Heart left ventricle (tissue), 16 donors: ENCODE measurements at regions of chr12 and their contacts with region 1.

Region 1: DNA sequence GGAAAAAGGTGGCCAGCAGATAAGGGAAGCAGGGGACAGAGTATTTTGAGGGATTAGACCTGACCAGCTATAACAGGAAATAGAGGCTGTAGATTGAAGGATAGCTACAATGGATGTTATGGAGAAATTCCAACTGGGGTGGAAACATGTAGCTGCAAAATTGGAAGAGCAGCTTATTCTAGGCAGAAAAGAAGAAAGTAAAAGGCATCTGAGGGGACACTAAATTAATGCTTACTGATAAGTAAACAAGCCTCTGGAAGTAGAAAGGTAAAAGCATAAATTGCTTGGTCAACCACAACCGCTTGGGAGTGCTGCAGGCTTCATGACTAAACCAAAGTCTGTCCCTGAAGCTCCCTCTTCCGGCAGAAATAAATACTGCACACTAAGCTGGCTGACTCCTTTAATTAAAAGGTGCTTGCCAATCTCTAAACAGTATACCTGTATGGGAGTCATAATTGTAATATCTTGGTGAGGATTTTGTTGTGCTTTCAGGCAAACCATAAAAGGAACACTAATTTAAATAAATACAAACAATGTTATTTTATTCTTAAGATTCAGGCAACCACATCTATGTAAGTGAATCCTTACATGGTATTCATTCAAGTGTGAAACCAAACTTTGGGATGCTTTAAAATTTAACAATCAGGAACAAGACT is 7.7 kb downstream of the UBC start:
- DNase-seq: peak; percentile 73 to 87 (median 85)
- ATAC-seq: peak in 3 of 4 donors; percentile 45 to 66 (median 56)
- H3K4me3 ChIP-seq: no peak overlapping the region
- H3K27ac ChIP-seq: peak overlapping the region in 1 of 12 donors; percentile 37
- H3K4me1 ChIP-seq: peaks cover 10 to 52% (median 37%) of the 10 kb centered on the region in 12 donors
- H3K27me3 ChIP-seq: no peaks in the 10 kb centered on the region
- CTCF ChIP-seq: peak; percentile 92 to 99 (median 97)
- POLR2A ChIP-seq: no peak

Region 2: DNA sequence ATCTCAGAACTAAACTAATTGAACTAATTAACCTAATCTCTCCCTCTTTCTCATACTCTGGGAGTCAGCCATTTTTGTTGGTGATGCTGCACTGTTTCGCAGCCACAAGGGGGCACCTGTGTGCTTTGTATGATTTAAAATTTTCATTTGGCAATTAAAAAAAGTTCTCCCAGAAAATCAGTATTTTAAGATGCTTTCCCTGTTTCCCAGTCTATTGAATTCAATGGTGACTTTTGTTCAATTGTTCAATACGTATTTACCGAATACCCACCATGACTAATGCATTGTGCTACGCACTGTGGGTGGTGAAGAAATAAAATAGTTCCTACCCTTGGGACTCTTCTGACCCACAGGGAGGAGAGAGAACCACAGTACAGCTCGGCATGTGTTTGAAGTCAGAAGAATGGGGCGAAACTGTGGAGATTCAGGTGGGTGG is 870.0 kb before region 1 on chr12:
- intact Hi-C with region 1: loop called in 5 of 10 experiments (anchors 5 to 10 kb)
- DNase-seq: peak in 1 of 5 donors; percentile 49
- ATAC-seq: peak in 3 of 4 donors; percentile 35 to 55 (median 51)
- H3K4me3 ChIP-seq: no peak overlapping the region
- H3K27ac ChIP-seq: no peak overlapping the region
- H3K4me1 ChIP-seq: peaks cover 0 to 9% (median 0%) of the 10 kb centered on the region in 12 donors
- H3K27me3 ChIP-seq: no peaks in the 10 kb centered on the region
- CTCF ChIP-seq: peak; percentile 84 to 99 (median 94)
- POLR2A ChIP-seq: no peak

Region 3: GRCh38 chr12:124786061-124786964 is 120.4 kb before region 1 on chr12:
- intact Hi-C with region 1: loop called in 2 of 10 experiments (anchors 5 to 10 kb)
- DNase-seq: peak; percentile 83 to 90 (median 87)
- ATAC-seq: peak; percentile 96 to 99 (median 98)
- H3K4me3 ChIP-seq: peak overlapping the region in 10 of 12 donors; percentile 9 to 71 (median 50)
- H3K27ac ChIP-seq: peak overlapping the region in 1 of 12 donors; percentile 47
- H3K4me1 ChIP-seq: peaks cover 0 to 6% (median 0%) of the 10 kb centered on the region in 12 donors
- H3K27me3 ChIP-seq: no peaks in the 10 kb centered on the region
- CTCF ChIP-seq: no peak
- POLR2A ChIP-seq: no peak

Region 4: DNA sequence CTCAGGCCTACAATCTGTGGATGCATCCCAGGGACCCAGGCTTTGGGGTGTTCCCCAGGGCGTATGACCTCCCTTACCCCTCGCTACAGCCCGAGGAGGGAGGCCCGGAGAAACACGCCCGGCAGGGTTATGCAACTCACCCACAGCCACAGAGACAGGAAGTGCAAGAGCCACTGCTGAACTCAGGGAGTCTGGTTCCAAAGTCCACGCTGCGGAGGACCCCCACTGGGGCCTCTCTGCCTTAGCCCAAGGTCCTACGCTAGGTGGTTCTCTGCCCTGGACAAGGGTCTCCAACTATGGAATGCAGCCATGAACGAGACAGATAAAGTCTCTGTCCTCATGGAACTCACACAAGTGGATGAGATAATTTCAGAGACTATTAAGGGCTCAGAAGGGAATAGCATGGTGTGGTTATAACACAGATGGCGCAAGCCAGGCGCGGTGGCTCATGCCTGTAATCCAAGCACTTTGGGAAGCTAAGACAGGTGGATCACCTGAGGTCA is 54.4 kb before region 1 on chr12:
- intact Hi-C with region 1: loop called in 1 of 10 experiments (anchors 10 kb)
- DNase-seq: peak in 4 of 5 donors; percentile 52 to 85 (median 68)
- ATAC-seq: peak; percentile 19 to 70 (median 48)
- H3K4me3 ChIP-seq: no peak overlapping the region
- H3K27ac ChIP-seq: peak overlapping the region in 2 of 12 donors; percentile 12 to 88
- H3K4me1 ChIP-seq: peaks cover 0 to 57% (median 31%) of the 10 kb centered on the region in 12 donors
- H3K27me3 ChIP-seq: no peaks in the 10 kb centered on the region
- CTCF ChIP-seq: no peak
- POLR2A ChIP-seq: no peak

Region 5: GRCh38 chr12:124863416-124864325 is 43.1 kb before region 1 on chr12 and contains the start of gene SCARB1:
- intact Hi-C with region 1: loop called in 3 of 10 experiments (anchors 5 to 10 kb)
- DNase-seq: peak; percentile 83 to 91 (median 85)
- ATAC-seq: peak; percentile 76 to 94 (median 91)
- H3K4me3 ChIP-seq: peak within 1 kb of the TSS; percentile 64 to 99 (median 81)
- H3K27ac ChIP-seq: peak within 1 kb of the TSS in 7 of 12 donors; percentile 38 to 69 (median 67)
- H3K4me1 ChIP-seq: peaks cover 5 to 49% (median 20%) of the 10 kb centered on the region in 12 donors
- H3K27me3 ChIP-seq: no peaks in the 10 kb centered on the region
- CTCF ChIP-seq: peak in 1 of 12 donors; percentile 13
- POLR2A ChIP-seq: peak in 1 of 2 donors; percentile 29
- total RNA-seq, gene SCARB1: 6.9 to 21.7 (median 15.2) TPM

Region 6: GRCh38 chr12:124869034-124869665 is 37.6 kb before region 1 on chr12:
- intact Hi-C with region 1: loop called in 2 of 10 experiments (anchors 5 kb)
- DNase-seq: peak in 1 of 5 donors; percentile 57
- ATAC-seq: peak in 3 of 4 donors; percentile 30 to 66 (median 58)
- H3K4me3 ChIP-seq: peak overlapping the region in 6 of 12 donors; percentile 4 to 42 (median 15)
- H3K27ac ChIP-seq: peak overlapping the region in 8 of 12 donors; percentile 30 to 75 (median 48)
- H3K4me1 ChIP-seq: peaks cover 0 to 32% (median under 1%) of the 10 kb centered on the region in 12 donors
- H3K27me3 ChIP-seq: no peaks in the 10 kb centered on the region
- CTCF ChIP-seq: no peak
- POLR2A ChIP-seq: no peak

Region 7: DNA sequence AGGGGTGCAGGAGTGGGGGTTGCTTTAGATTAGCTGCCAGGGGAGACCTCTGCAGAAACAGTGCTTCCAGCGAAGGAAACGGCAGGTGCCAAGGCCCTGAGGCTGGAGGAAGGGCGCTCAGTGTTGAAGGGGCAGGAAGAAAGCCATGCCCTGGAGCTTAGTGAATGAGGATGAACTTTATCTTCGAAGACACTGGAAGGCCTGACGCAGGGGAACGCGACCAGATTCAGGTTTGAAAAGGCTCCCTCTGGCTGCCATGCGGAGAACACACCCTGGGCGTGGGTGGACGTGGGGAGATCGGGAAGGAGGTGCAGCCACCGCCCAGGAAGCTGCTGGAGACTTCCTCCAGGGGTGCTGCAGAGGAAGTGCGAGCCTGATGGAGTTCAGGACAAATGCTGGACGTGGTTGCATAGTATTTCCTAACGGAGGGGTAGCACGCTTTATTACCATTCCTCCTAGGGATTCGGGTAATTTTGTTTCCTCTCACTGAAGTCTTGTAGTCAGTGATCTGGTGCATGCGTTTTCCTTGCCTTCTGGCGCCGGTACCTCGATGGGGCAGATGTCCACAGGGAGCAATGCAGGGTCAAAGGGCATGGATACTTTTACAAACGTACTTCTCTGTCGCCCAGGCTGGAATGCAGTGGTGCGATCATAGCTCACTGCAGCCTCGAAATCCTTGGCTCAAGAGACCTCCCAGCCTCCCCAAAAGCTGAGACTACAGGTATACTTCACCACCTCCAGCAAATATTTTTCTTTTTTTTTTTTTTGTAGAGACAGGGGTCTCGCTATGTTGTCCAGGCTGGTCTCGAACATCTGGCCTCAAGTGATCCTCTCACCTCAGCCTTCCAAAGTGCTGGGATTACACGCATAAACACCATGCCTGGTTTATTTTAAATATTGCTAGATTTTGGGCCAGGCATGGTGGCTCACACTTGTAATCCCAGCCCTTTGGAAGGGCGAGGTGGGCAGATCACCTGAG is 34.1 kb after region 1 on chr12:
- intact Hi-C with region 1: loop called in 7 of 10 experiments (anchors 2 to 5 kb)
- DNase-seq: peak; percentile 90 to 94 (median 94)
- ATAC-seq: peak; percentile 60 to 86 (median 77)
- H3K4me3 ChIP-seq: peak overlapping the region in 11 of 12 donors; percentile 2 to 69 (median 57)
- H3K27ac ChIP-seq: peak overlapping the region; percentile 62 to 96 (median 88)
- H3K4me1 ChIP-seq: peaks cover 0 to 39% (median 25%) of the 10 kb centered on the region in 12 donors
- H3K27me3 ChIP-seq: no peaks in the 10 kb centered on the region
- CTCF ChIP-seq: peak; percentile 83 to 97 (median 92)
- POLR2A ChIP-seq: peak in 1 of 2 donors; percentile 37

Region 8: GRCh38 chr12:124992874-124993625 is 86.3 kb after region 1 on chr12:
- intact Hi-C with region 1: no loop called
- DNase-seq: peak in 3 of 5 donors; percentile 56 to 75 (median 74)
- ATAC-seq: peak; percentile 20 to 83 (median 70)
- H3K4me3 ChIP-seq: peak overlapping the region; percentile 14 to 89 (median 58)
- H3K27ac ChIP-seq: peak overlapping the region in 3 of 12 donors; percentile 22 to 71 (median 29)
- H3K4me1 ChIP-seq: peaks cover 0 to 38% (median 15%) of the 10 kb centered on the region in 12 donors
- H3K27me3 ChIP-seq: no peaks in the 10 kb centered on the region
- CTCF ChIP-seq: peak in 3 of 12 donors; percentile 9 to 13 (median 10)
- POLR2A ChIP-seq: no peak

Region 9: GRCh38 chr12:125049093-125049458 is 142.3 kb after region 1 on chr12:
- intact Hi-C with region 1: no loop called
- DNase-seq: no peak
- ATAC-seq: no peak
- H3K4me3 ChIP-seq: peak overlapping the region; percentile 2 to 68 (median 57)
- H3K27ac ChIP-seq: peak overlapping the region in 10 of 12 donors; percentile 50 to 83 (median 72)
- H3K4me1 ChIP-seq: peaks cover 0 to 10% (median 3%) of the 10 kb centered on the region in 12 donors
- H3K27me3 ChIP-seq: no peaks in the 10 kb centered on the region
- CTCF ChIP-seq: no peak
- POLR2A ChIP-seq: no peak